ENCODE measurements at regions of chr1 and their contacts with region 1.

Region 1: DNA sequence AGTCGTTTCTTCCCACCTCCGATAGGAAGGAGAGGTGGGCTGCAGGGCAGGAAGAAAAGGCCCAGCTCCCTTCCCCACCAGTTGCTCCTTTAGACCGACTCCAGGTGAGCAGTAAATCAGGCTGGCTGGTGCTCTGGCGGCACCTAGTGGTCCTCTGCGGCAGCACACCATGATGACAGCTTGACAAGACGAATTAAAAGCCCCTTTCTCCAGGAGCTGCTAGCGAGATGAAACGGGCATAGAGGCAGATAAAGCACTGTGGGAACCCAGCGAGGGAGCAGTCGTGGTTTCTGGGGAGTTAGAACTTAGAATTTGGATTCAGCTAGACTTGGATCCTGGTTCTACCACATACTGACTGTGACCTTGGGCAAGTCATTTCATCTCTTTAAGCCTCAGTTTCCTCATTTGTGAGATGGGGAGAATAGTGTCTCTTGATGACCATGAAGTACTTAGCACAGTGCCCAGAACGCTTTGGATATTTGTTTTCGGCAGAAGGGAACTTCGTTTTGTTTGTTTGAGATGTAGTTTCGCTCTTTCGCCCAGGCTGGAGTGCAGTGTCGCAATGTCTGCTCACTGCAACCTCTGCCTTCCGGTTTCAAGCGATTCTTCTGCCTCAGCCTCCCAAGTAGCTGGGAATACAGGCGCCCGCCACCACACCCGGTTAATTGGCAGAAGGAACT is 21.8 kb upstream of the COL9A2 start:
- DNase-seq: no peak
- H3K4me3 ChIP-seq: peak overlapping the region in 1 of 4 donors; percentile 22
- H3K27ac ChIP-seq: peak overlapping the region; percentile 5 to 59 (median 20)
- H3K4me1 ChIP-seq: peaks cover 0 to 15% (median 0%) of the 10 kb centered on the region in 3 donors
- H3K27me3 ChIP-seq: peaks cover 0 to 7% (median 0%) of the 10 kb centered on the region in 4 donors
- CTCF ChIP-seq: peak; percentile 93 to 99 (median 96)
- POLR2A ChIP-seq: no peak

Region 2: GRCh38 chr1:39919545-39919944 is 419.3 kb before region 1 on chr1:
- intact Hi-C with region 1: no loop called
- DNase-seq: no peak
- H3K4me3 ChIP-seq: no peak overlapping the region
- H3K27ac ChIP-seq: no peak overlapping the region
- H3K4me1 ChIP-seq: peaks cover 5 to 18% (median 6%) of the 10 kb centered on the region in 3 donors
- H3K27me3 ChIP-seq: peaks cover 0 to 16% (median 0%) of the 10 kb centered on the region in 4 donors
- CTCF ChIP-seq: peak; percentile 43 to 86 (median 67)
- POLR2A ChIP-seq: no peak

Region 3: GRCh38 chr1:40014812-40015594 is 323.9 kb before region 1 on chr1:
- intact Hi-C with region 1: no loop called
- DNase-seq: no peak
- H3K4me3 ChIP-seq: no peak overlapping the region
- H3K27ac ChIP-seq: no peak overlapping the region
- H3K4me1 ChIP-seq: no peaks in the 10 kb centered on the region
- H3K27me3 ChIP-seq: peaks cover 0 to 4% (median 0%) of the 10 kb centered on the region in 4 donors
- CTCF ChIP-seq: no peak
- POLR2A ChIP-seq: no peak

Region 4: DNA sequence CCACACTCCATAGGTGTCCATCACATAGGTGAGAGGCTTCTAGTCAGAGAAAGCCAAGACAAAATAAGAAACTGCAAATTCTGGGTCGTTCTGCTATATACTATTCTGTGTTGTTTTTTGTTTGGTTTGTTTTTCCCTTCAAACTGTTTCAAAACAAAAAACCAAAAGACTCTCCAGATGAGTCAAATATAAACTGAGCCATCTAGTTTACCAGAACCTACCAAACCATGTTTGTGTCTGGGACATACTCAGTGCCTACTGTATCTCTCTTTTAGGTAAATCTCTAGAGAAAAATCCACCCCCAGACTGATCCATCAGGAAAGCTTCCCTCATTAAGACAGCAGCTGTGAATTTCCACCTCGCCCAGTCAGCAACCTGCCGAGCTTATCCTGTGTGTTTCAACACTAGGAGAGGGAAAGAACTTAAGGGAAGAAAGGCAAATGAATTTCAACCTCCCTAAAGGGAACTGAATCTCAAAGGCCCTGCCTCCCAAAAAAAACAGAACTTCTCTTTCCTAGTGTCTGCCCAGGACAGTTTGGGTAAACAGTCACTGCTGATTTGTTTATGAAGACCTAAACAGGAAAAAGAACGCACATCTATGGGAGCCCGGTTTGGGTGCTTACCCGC is 259.0 kb before region 1 on chr1:
- intact Hi-C with region 1: loop called (anchors 5 kb)
- DNase-seq: no peak
- H3K4me3 ChIP-seq: no peak overlapping the region
- H3K27ac ChIP-seq: peak overlapping the region in 1 of 4 donors; percentile 17
- H3K4me1 ChIP-seq: peaks cover 0 to 25% (median 9%) of the 10 kb centered on the region in 3 donors
- H3K27me3 ChIP-seq: no peaks in the 10 kb centered on the region
- CTCF ChIP-seq: no peak
- POLR2A ChIP-seq: no peak

Region 5: DNA sequence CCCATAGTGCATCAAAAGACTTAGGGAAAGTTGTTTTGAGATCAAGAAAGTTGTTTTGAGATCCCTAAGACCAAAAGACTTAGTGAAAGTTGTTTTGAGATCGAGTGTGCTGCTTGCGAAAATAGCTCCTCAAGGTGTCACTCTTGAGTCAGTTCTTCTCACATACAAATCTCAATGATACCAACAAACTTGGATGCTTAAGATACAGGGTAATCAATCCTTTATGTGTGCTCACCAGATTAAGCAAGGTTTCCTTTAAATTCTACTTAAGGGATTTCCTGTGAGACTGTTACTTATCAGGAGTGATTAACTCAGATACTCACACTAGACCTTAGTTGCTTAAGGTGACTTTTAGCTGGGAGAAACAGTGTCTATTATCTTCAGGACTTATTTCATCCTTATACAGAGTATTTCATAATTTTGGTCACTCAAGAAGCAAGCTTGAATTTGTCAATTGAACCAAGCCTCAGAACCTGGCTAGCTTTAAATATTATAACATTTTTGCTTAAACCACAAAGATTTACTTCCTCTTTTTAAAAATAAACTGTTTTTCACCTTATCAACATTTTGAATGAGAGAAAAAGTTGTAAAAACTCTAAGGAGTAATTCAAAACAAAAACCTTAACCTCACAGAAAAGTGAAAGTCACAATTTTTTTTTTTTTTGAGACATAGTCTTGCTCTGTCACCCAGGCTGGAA is 185.7 kb before region 1 on chr1:
- intact Hi-C with region 1: loop called (anchors 5 kb)
- DNase-seq: no peak
- H3K4me3 ChIP-seq: no peak overlapping the region
- H3K27ac ChIP-seq: no peak overlapping the region
- H3K4me1 ChIP-seq: peaks cover 0 to 4% (median 0%) of the 10 kb centered on the region in 3 donors
- H3K27me3 ChIP-seq: peaks cover 0 to 13% (median 0%) of the 10 kb centered on the region in 4 donors
- CTCF ChIP-seq: peak; percentile 42 to 65 (median 59)
- POLR2A ChIP-seq: no peak